CD8-positive, alpha-beta memory T cell (primary cell): ENCODE measurements at regions of chr4 and their contacts with region 1.

Region 1: GRCh38 chr4:36244257-36245079 is at the start of gene ARAP2:
- DNase-seq: peak; percentile 74 to 89 (median 78)
- H3K4me3 ChIP-seq: peak within 1 kb of the TSS; percentile 85
- H3K4me3 Mint-ChIP-seq: peak within 1 kb of the TSS; percentile 87 to 97 (median 95)
- H3K27ac ChIP-seq: peak within 1 kb of the TSS; percentile 91
- H3K27ac Mint-ChIP-seq: peak within 1 kb of the TSS; percentile 93 to 98 (median 98)
- H3K4me1 ChIP-seq: peaks cover 26% of the 10 kb centered on the region
- H3K4me1 Mint-ChIP-seq: peaks cover 51 to 61% (median 54%) of the 10 kb centered on the region in 3 donors
- H3K27me3 ChIP-seq: no peaks in the 10 kb centered on the region
- H3K27me3 Mint-ChIP-seq: no peaks in the 10 kb centered on the region
- total RNA-seq, gene ARAP2: 49.7 to 49.9 TPM

Region 2: GRCh38 chr4:36187723-36188333 is 56.6 kb before region 1 on chr4:
- CTCF ChIA-PET with region 1: interaction called, 20 read pairs
- POLR2A ChIA-PET with region 1: interaction called, 10 read pairs
- DNase-seq: peak in 3 of 5 donors; percentile 9 to 52 (median 15)
- H3K4me3 ChIP-seq: no peak overlapping the region
- H3K4me3 Mint-ChIP-seq: no peak overlapping the region
- H3K27ac ChIP-seq: no peak overlapping the region
- H3K27ac Mint-ChIP-seq: peak overlapping the region in 3 of 8 donors; percentile 27 to 76 (median 36)
- H3K4me1 ChIP-seq: peaks cover 38% of the 10 kb centered on the region
- H3K4me1 Mint-ChIP-seq: peaks cover 53 to 70% (median 69%) of the 10 kb centered on the region in 3 donors
- H3K27me3 ChIP-seq: no peaks in the 10 kb centered on the region
- H3K27me3 Mint-ChIP-seq: no peaks in the 10 kb centered on the region

Region 3: DNA sequence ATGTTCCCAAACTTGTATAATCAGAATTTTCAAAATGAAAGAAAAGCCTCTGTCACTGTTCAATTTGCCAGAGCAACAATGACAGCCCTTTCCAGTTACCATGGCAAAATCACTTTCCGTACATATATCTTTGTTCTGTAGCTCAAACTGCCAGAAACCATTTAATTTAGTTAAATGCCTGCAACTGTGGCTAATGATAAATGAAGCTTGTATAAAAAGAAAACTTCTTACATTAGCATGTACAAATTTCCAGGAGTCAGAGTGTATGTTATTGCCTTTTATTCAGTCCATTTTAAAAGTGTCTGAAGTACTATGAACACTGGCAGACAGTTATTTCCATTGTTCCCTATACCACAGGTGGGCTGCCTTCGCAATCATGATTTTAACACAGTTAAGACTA is 30.5 kb before region 1 on chr4:
- CTCF ChIA-PET with region 1: interaction called, 14 read pairs
- POLR2A ChIA-PET with region 1: interaction called, 6 read pairs
- DNase-seq: no peak
- H3K4me3 ChIP-seq: no peak overlapping the region
- H3K4me3 Mint-ChIP-seq: peak overlapping the region in 3 of 7 donors; percentile 3 to 41 (median 37)
- H3K27ac ChIP-seq: no peak overlapping the region
- H3K27ac Mint-ChIP-seq: peak overlapping the region in 2 of 8 donors; percentile 44 to 50
- H3K4me1 ChIP-seq: peaks cover 21% of the 10 kb centered on the region
- H3K4me1 Mint-ChIP-seq: peaks cover 72 to 92% (median 91%) of the 10 kb centered on the region in 3 donors
- H3K27me3 ChIP-seq: no peaks in the 10 kb centered on the region
- H3K27me3 Mint-ChIP-seq: no peaks in the 10 kb centered on the region

Region 4: DNA sequence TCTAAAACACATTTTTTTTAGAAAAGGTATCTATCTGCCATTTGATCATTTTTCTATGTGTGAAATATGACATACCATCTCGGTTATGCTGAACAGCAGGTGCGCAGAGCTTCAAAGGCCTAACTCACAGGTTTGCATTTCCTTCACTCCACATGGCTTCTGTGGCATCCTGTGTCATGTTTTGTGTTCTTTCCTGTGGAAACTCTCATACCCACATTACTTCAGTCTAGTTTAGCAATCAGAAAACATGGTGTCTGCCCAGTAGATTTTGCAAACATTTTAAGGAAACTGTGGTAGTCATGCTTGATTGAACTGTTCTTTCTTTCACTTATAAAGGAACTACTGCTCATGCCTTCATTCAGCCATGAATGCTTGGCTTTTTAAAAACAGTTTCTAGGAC is 11.1 kb after region 1 on chr4:
- CTCF ChIA-PET with region 1: interaction called, 23 read pairs
- POLR2A ChIA-PET with region 1: interaction called, 62 read pairs
- DNase-seq: peak; percentile 46 to 90 (median 82)
- H3K4me3 ChIP-seq: no peak overlapping the region
- H3K4me3 Mint-ChIP-seq: peak overlapping the region; percentile 38 to 85 (median 79)
- H3K27ac ChIP-seq: no peak overlapping the region
- H3K27ac Mint-ChIP-seq: peak overlapping the region; percentile 61 to 97 (median 92)
- H3K4me1 ChIP-seq: peaks cover 40% of the 10 kb centered on the region
- H3K4me1 Mint-ChIP-seq: peaks cover 57 to 64% (median 64%) of the 10 kb centered on the region in 3 donors
- H3K27me3 ChIP-seq: no peaks in the 10 kb centered on the region
- H3K27me3 Mint-ChIP-seq: no peaks in the 10 kb centered on the region

Region 5: DNA sequence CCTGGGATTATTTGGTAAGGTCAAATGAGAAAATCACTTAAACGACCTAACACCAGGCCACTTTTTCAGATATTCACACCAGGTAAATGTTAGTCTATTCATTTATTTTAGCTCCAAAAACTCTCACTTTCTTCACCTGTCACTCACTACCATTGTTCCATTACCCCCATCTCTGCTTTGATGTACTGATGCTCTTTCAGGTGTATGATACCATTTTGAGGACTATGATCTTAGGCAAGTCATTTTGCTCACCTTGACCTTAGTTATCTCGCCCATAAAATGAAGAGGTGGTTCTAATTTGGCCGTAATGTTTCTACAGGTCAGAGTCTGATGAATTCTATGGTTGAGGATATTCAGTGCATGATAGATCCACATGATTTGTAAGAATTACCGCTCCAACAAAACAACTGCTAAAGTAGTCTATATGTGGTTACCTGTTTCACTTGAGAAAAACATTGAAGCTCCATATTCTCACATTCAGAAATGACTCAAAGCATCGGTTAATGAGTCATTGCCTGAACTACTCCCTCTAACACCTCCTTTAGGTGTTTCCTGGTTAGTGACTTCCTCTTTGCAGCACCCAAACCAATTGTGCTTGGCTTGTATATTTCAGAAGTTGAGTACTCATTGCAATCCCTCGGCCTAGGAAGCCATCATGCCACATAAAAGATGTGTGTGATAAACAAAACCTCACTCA is 41.5 kb after region 1 on chr4:
- CTCF ChIA-PET with region 1: interaction called, 27 read pairs
- POLR2A ChIA-PET with region 1: interaction called, 30 read pairs
- DNase-seq: peak; percentile 33 to 84 (median 44)
- H3K4me3 ChIP-seq: peak overlapping the region; percentile 21
- H3K4me3 Mint-ChIP-seq: peak overlapping the region; percentile 76 to 94 (median 86)
- H3K27ac ChIP-seq: peak overlapping the region; percentile 66
- H3K27ac Mint-ChIP-seq: peak overlapping the region; percentile 80 to 97 (median 94)
- H3K4me1 ChIP-seq: peaks cover 19% of the 10 kb centered on the region
- H3K4me1 Mint-ChIP-seq: peaks cover 66 to 94% (median 87%) of the 10 kb centered on the region in 3 donors
- H3K27me3 ChIP-seq: no peaks in the 10 kb centered on the region
- H3K27me3 Mint-ChIP-seq: no peaks in the 10 kb centered on the region

Region 6: GRCh38 chr4:36399762-36400353 is 155.4 kb after region 1 on chr4:
- CTCF ChIA-PET with region 1: interaction called, 13 read pairs
- POLR2A ChIA-PET with region 1: interaction called, 3 read pairs
- DNase-seq: peak; percentile 24 to 61 (median 31)
- H3K4me3 ChIP-seq: no peak overlapping the region
- H3K4me3 Mint-ChIP-seq: no peak overlapping the region
- H3K27ac ChIP-seq: no peak overlapping the region
- H3K27ac Mint-ChIP-seq: no peak overlapping the region
- H3K4me1 ChIP-seq: peaks cover 2% of the 10 kb centered on the region
- H3K4me1 Mint-ChIP-seq: peaks cover 0 to 7% (median 6%) of the 10 kb centered on the region in 3 donors
- H3K27me3 ChIP-seq: no peaks in the 10 kb centered on the region
- H3K27me3 Mint-ChIP-seq: no peaks in the 10 kb centered on the region